ENCODE measurements at regions of chr1 and their contacts with region 1.

Region 1: DNA sequence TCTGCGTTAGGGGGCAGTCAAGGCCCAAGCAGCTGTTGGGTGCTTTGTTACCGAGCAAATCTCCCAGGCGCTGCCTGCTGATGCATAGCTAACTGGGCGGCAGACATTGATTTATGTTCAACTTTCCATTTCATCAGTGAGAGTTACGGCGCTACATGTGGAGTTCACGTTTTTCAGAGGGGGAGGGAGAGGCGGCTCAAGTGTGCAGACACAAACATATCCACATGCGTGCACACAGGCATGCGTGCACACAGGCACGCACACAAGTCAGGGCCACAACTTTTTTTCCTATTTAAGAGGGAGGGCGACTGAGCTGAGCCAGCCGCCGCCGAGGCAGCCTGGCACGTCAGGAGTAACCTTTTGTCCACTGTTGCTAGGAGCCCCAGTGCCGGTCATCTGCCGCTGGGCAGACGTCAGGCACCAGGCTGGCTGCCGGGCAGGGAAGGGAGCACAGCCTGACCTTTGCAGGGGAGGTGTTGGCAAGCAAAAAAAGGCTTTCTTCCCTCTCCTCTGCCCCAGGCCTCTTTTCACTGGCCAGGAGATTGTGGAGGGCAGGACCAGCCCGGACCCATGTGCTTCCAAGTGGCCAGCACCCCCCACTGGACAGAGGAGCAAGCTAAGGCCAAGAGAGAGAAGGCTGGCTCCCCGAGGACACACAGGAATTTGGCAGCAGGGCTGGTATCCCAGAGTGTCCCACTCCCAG is 73.3 kb downstream of the MRPL37 start:
- DNase-seq: peak; percentile 78 to 91
- ATAC-seq: peak; percentile 87 to 89 (median 88)
- H3K4me3 ChIP-seq: peak overlapping the region; percentile 56
- H3K27ac ChIP-seq: peak overlapping the region; percentile 87
- H3K4me1 ChIP-seq: peaks cover 84% of the 10 kb centered on the region
- H3K27me3 ChIP-seq: no peaks in the 10 kb centered on the region
- CTCF ChIP-seq: peak; percentile 57

Region 2: DNA sequence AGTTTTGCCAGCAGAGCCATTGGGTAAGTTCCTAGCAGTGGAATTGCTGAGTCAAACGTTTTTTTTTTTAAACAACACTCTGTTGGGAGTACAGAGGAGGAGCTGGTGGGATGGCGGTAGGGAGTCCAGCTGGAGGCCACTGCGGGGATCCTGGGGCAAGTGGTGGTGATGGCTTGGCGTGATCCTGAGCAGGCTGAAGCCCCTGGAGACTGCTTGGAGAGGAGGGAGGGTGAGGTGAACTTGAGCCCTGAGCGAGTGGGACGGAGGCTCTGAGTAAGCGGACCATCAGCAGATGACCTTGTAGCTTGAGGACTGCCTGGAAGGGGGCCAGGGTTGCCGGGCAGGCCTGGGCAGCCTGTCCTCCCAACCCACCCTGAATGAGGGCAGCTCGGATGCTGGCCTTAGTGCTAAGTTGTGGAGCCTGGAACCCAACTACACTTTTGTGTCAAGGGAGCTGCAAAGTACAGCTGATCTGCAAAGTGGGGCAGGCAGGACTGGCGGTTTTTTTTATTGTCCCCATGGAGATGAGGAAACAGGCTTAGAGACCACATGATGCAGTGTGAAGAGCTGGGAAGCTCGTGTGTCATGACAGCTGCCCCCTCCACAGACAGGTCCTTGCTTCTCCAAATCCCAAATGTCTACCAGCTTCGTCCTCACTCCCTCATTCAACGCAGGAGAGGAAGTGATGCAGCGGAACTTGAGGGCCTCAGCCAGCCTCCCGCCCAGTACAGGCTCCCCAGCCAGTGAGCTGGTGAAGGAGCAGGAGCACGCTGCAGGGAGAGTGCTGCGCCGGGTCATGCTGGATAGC is 53.0 kb before region 1 on chr1:
- intact Hi-C with region 1: loop called in 1 of 2 experiments (anchors 5 kb)
- DNase-seq: peak; percentile 79 to 85
- ATAC-seq: peak; percentile 82 to 89 (median 86)
- H3K4me3 ChIP-seq: no peak overlapping the region
- H3K27ac ChIP-seq: peak overlapping the region; percentile 67
- H3K4me1 ChIP-seq: peaks cover 20% of the 10 kb centered on the region
- H3K27me3 ChIP-seq: no peaks in the 10 kb centered on the region
- CTCF ChIP-seq: no peak

Region 3: DNA sequence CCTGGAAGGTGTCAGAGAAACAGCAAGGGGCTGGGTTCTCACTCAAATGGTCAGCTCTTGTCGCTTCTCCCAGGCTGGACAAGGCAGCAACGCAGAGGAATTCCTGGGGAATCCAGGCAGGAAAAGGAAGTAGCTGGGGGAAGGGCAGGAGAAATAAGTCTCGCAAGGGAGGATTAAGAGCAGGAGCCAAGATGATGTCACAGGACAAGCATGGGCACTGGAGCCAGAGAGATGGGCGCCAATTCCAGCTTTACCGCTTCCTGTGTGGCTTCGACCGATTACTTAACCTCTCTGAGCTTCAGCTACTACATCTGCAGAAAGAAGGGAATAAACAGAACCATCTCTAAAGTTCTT is 62.5 kb after region 1 on chr1:
- intact Hi-C with region 1: loop called (anchors 5 to 10 kb)
- DNase-seq: peak; percentile 67 to 84
- ATAC-seq: peak; percentile 74 to 80 (median 76)
- H3K4me3 ChIP-seq: peak overlapping the region; percentile 55
- H3K27ac ChIP-seq: peak overlapping the region; percentile 93
- H3K4me1 ChIP-seq: peaks cover 86% of the 10 kb centered on the region
- H3K27me3 ChIP-seq: no peaks in the 10 kb centered on the region
- CTCF ChIP-seq: no peak

Region 4: DNA sequence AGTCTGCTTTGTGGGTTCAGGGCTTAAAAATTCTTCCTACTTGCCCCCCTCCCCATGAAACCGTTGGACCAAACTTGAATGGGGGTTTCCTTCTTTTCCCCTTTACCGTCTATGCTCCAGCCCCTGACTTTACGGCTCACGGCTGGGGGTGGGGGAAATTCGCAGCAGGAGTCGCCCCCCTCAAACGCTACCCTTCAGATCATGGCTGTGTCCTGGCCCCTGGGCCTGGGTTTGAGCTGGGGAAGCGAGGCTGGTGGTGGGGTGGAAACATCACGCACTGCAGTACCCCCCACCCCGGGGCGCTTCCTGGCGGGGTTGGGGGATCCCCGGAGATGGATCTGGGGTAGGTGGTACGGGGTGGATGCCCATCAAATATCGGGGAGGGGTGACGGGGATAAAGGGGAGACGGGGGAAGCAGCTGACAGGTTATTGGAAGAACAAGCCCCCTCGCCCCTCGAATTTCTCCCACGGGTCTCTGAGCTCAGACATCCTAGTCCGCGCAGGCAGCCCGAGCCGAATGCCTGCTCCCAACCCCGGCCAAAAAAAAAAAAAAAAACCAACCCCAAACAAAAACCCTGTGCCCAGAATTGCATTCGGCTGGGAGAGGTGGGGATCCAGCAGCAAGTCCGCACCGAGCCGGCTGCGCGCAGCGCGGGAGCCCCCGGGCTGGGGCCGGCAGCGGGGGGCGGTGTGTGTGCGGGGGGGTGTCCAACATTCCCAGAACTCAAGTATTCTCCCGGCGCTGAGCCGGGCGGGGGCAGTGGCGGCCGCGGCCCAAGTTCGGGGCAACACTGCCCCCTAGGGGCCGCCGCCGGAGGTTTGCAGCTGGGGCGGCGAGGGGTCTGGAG is 215.8 kb after region 1 on chr1:
- intact Hi-C with region 1: loop called (anchors 2 to 5 kb)
- DNase-seq: peak; percentile 78 to 89
- ATAC-seq: peak; percentile 79 to 83 (median 82)
- H3K4me3 ChIP-seq: peak overlapping the region; percentile 81
- H3K27ac ChIP-seq: peak overlapping the region; percentile 87
- H3K4me1 ChIP-seq: peaks cover 27% of the 10 kb centered on the region
- H3K27me3 ChIP-seq: no peaks in the 10 kb centered on the region
- CTCF ChIP-seq: peak; percentile 96